CD8-positive, alpha-beta T cell (primary cell): ENCODE measurements at regions of chr10 and their contacts with region 1.

Region 1: GRCh38 chr10:64880546-64880945 is 1359.3 kb downstream of the REEP3 start:
- DNase-seq: no peak
- ATAC-seq: no peak
- H3K4me3 ChIP-seq: no peak overlapping the region
- H3K4me3 Mint-ChIP-seq: no peak overlapping the region
- H3K27ac ChIP-seq: no peak overlapping the region
- H3K27ac Mint-ChIP-seq: no peak overlapping the region
- H3K4me1 ChIP-seq: no peaks in the 10 kb centered on the region
- H3K4me1 Mint-ChIP-seq: no peaks in the 10 kb centered on the region
- H3K27me3 ChIP-seq: no peaks in the 10 kb centered on the region
- H3K27me3 Mint-ChIP-seq: no peaks in the 10 kb centered on the region
- CTCF ChIP-seq: no peak

Region 2: DNA sequence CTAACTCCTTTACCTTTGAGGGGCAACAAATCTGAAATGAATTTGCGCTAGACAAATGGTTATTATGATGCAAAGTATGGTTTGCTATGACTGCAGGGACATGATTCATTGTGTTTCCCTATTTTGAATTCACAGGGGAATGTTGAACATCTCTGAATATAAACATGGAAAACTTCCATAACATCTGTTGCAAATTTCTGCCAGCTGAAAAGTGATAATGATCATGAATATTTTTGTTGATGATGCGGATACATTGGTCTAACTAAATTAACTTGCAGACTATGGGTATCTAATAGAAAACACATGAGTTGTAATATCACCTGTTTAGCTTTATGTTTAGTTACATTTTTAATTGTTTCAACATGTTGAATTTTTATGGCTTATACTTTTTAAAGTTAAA is 33.8 kb before region 1 on chr10:
- CTCF ChIA-PET with region 1: no interaction called
- POLR2A ChIA-PET with region 1: no interaction called
- intact Hi-C with region 1: loop called in 1 of 2 experiments (anchors 1 kb)
- DNase-seq: no peak
- ATAC-seq: no peak
- H3K4me3 ChIP-seq: no peak overlapping the region
- H3K4me3 Mint-ChIP-seq: no peak overlapping the region
- H3K27ac ChIP-seq: no peak overlapping the region
- H3K27ac Mint-ChIP-seq: no peak overlapping the region
- H3K4me1 ChIP-seq: no peaks in the 10 kb centered on the region
- H3K4me1 Mint-ChIP-seq: no peaks in the 10 kb centered on the region
- H3K27me3 ChIP-seq: no peaks in the 10 kb centered on the region
- H3K27me3 Mint-ChIP-seq: no peaks in the 10 kb centered on the region
- CTCF ChIP-seq: no peak